Gastrocnemius medialis (tissue), 4 donors: ENCODE measurements at regions of chr18 and their contacts with region 1.

Region 1: GRCh38 chr18:77023102-77023782 is 109.3 kb downstream of the MBP start:
- DNase-seq: peak; percentile 67 to 75
- ATAC-seq: peak; percentile 98 to 99
- H3K4me3 ChIP-seq: peak overlapping the region in 1 of 4 donors; percentile 23
- H3K27ac ChIP-seq: peak overlapping the region; percentile 74 to 87 (median 78)
- H3K4me1 ChIP-seq: peaks cover 17 to 19% of the 10 kb centered on the region in 2 donors
- H3K27me3 ChIP-seq: no peaks in the 10 kb centered on the region
- CTCF ChIP-seq: no peak
- POLR2A ChIP-seq: no peak

Region 2: GRCh38 chr18:77042583-77042982 is 19.3 kb after region 1 on chr18:
- in situ Hi-C with region 1: no loop called
- intact Hi-C with region 1: loop called (anchors 2 kb)
- DNase-seq: peak in 1 of 2 donors; percentile 80
- ATAC-seq: peak; percentile 86 to 94
- H3K4me3 ChIP-seq: peak overlapping the region in 3 of 4 donors; percentile 5 to 19 (median 14)
- H3K27ac ChIP-seq: peak overlapping the region; percentile 68 to 82 (median 81)
- H3K4me1 ChIP-seq: peaks cover 24 to 27% of the 10 kb centered on the region in 2 donors
- H3K27me3 ChIP-seq: no peaks in the 10 kb centered on the region
- CTCF ChIP-seq: no peak
- POLR2A ChIP-seq: no peak